HCT116 (cell line): ENCODE measurements at regions of chr17 and their contacts with region 1.

Region 1: GRCh38 chr17:32877164-32877764 is 340 bp upstream of the MYO1D start:
- DNase-seq: peak; percentile 65
- ATAC-seq: peak; percentile 94
- H3K4me3 ChIP-seq: peak overlapping the region; percentile 58 to 72
- H3K27ac ChIP-seq: peak overlapping the region; percentile 97; the same call in 1 of the 2 replicates
- H3K4me1 ChIP-seq: peaks cover 8 to 15% of the 10 kb centered on the region in 2 experiments; a peak in 3 of 4 replicates
- H3K27me3 ChIP-seq: no peaks in the 10 kb centered on the region
- CTCF ChIP-seq: peak; percentile 63 to 82 (median 76)
- POLR2A ChIP-seq: no peak
- RAD21 ChIP-seq: peak; percentile 55

Region 2: GRCh38 chr17:32671896-32672295 is 205.4 kb before region 1 on chr17:
- CTCF ChIA-PET with region 1: no interaction called
- POLR2A ChIA-PET with region 1: no interaction called
- RAD21 ChIA-PET with region 1: no interaction called
- intact Hi-C with region 1: loop called (anchors 10 kb)
- DNase-seq: no peak
- ATAC-seq: no peak
- H3K4me3 ChIP-seq: no peak overlapping the region
- H3K27ac ChIP-seq: no peak overlapping the region
- H3K4me1 ChIP-seq: no peaks in the 10 kb centered on the region
- H3K27me3 ChIP-seq: no peaks in the 10 kb centered on the region
- CTCF ChIP-seq: no peak
- POLR2A ChIP-seq: no peak
- RAD21 ChIP-seq: no peak

Region 3: GRCh38 chr17:32854207-32854606 is 23.1 kb before region 1 on chr17:
- CTCF ChIA-PET with region 1: interaction called, 16 read pairs
- POLR2A ChIA-PET with region 1: no interaction called
- RAD21 ChIA-PET with region 1: no interaction called
- intact Hi-C with region 1: no loop called
- DNase-seq: peak; percentile 3
- ATAC-seq: no peak
- H3K4me3 ChIP-seq: no peak overlapping the region
- H3K27ac ChIP-seq: peak overlapping the region; percentile 22; the same call in 1 of the 2 replicates
- H3K4me1 ChIP-seq: peaks cover 14 to 25% of the 10 kb centered on the region in 2 experiments
- H3K27me3 ChIP-seq: no peaks in the 10 kb centered on the region
- CTCF ChIP-seq: no peak
- POLR2A ChIP-seq: no peak
- RAD21 ChIP-seq: no peak

Region 4: DNA sequence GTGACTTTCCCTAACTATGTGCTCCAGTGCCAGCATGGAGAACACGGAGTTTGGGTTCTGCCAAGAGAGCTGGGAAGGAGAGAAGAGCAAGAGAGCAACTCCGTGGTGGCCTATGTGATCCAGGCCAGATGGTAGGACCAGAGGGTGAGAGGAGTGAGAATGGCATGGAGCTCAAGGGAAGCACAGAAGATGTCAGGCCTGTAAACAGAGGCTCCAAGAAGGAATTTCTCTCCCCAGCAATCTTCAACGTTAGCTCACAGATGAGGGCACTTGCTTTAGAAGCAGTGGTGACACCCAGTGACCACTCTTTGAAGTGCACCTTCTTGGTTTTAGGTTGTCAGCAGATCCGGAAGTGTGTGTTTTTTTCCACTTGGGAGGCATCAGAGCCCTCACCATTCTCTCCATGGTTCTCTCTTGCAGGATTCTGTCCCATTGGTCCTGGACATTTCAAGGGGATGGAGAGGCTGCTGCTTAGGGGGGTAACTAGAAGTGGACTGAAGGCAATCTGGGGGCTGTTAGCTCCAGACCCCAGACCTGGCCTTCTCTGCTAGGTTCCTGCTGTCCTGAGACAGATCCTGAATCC is 32.6 kb after region 1 on chr17:
- CTCF ChIA-PET with region 1: interaction called, 13 read pairs
- POLR2A ChIA-PET with region 1: no interaction called
- RAD21 ChIA-PET with region 1: interaction called in 1 of 2 experiments, 3 read pairs
- intact Hi-C with region 1: no loop called
- DNase-seq: peak; percentile 78
- ATAC-seq: peak; percentile 91
- H3K4me3 ChIP-seq: no peak overlapping the region
- H3K27ac ChIP-seq: no peak overlapping the region
- H3K4me1 ChIP-seq: peaks cover 0 to 6% of the 10 kb centered on the region in 2 experiments; a peak in 2 of 4 replicates
- H3K27me3 ChIP-seq: no peaks in the 10 kb centered on the region
- CTCF ChIP-seq: peak; percentile 60 to 76 (median 75); a peak in 5 of 6 replicates
- POLR2A ChIP-seq: no peak
- RAD21 ChIP-seq: peak; percentile 73

Region 5: DNA sequence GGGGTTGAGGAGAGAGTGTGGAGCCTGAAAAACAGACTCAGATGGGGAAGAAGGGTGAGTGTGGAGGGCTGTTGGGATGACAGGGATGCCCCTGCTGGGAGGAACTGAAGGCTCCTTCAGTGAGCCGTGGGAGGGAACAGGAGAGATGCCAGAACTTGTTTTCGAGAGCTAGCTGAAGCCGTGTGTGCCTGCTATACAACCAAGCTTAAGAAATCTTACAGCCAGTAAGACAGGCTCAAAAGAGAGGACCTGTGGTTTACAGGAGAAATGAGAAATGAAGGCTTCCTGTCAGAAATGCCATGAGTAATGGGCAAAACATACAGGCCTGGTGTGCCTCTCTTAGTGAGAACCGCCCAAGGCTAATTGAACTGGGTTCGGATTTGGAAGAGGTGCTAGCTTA is 214.0 kb after region 1 on chr17:
- CTCF ChIA-PET with region 1: no interaction called
- POLR2A ChIA-PET with region 1: no interaction called
- RAD21 ChIA-PET with region 1: no interaction called
- intact Hi-C with region 1: no loop called
- DNase-seq: no peak
- ATAC-seq: no peak
- H3K4me3 ChIP-seq: no peak overlapping the region
- H3K27ac ChIP-seq: no peak overlapping the region
- H3K4me1 ChIP-seq: no peaks in the 10 kb centered on the region
- H3K27me3 ChIP-seq: peaks cover 46% of the 10 kb centered on the region
- CTCF ChIP-seq: no peak
- POLR2A ChIP-seq: no peak
- RAD21 ChIP-seq: no peak